ENCODE measurements at regions of chr9 and their contacts with region 1.

Region 1: GRCh38 chr9:117411548-117411947 is 3.3 kb downstream of the ASTN2 start:
- DNase-seq: peak; percentile 74
- H3K4me3 ChIP-seq: peak overlapping the region in 1 of 2 experiments; percentile 23; a peak in 2 of 4 replicates
- H3K27ac ChIP-seq: peak overlapping the region in 1 of 2 experiments; percentile 73; a peak in 1 of 4 replicates
- H3K4me1 ChIP-seq: peaks cover 0 to 41% of the 10 kb centered on the region in 2 experiments; a peak in 2 of 4 replicates
- H3K27me3 ChIP-seq: peaks cover 33% of the 10 kb centered on the region
- CTCF ChIP-seq: peak; percentile 65
- EP300 ChIP-seq: peak in 1 of 2 experiments; percentile 36; a peak in 1 of 4 replicates
- RAD21 ChIP-seq: peak; percentile 89

Region 2: DNA sequence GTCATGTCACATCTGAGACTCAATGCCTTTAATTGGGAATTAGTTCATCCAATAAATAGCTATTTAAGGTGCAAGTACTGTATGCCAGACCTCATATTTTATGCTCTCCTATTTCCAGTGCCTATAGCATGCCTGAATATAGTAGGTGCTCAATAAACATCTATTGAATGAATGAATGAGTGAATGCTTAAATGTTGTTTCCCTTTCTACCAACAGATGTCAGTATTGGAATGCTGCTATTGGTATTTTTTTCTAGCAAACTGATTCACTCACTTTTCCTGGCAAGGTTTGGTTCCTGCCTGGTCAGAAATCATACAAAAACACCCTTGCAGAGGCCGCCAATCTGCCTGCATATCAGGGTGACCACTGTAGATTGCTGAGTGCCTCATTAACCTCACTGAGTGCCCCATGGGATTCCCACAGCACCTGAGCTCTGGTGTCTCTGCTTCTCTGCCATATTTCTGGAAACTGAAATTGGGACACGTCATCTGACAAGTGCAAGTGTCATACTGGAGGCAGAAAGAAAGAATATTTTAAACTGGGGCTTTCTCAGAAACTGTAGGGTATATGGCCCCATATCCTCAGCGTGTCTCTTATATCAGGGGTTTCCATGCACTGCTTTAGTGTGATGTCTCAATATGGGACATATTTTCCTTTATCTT is 364.8 kb before region 1 on chr9:
- CTCF ChIA-PET with region 1: interaction called, 10 read pairs
- POLR2A ChIA-PET with region 1: no interaction called
- DNase-seq: no peak
- H3K4me3 ChIP-seq: no peak overlapping the region
- H3K27ac ChIP-seq: no peak overlapping the region
- H3K4me1 ChIP-seq: peaks cover 0 to 3% of the 10 kb centered on the region in 2 experiments; a peak in 1 of 4 replicates
- H3K27me3 ChIP-seq: no peaks in the 10 kb centered on the region
- CTCF ChIP-seq: 0 out of 2 replicates have a peak, but pooled peaks have one; percentile 20
- EP300 ChIP-seq: no peak
- RAD21 ChIP-seq: peak; percentile 45; the same call in 1 of the 2 replicates

Region 3: DNA sequence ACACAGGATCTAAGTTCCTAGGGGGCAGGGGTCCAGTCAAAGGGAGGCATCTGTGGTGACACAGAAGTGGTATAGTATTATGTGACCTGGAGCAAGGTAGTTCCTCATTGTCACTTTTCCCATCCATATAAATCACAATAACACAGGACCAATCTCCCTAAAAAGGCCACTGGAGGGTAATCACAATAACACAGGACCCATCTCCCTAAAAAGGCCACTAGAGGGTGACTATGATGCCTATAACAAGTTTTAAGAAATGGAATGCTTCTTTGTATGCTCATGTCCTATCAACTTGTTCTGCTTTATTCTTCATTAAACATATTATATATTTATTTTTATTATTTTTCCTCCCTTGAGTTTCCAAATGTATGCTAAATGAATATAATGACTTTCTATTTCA is 251.3 kb before region 1 on chr9:
- CTCF ChIA-PET with region 1: interaction called, 12 read pairs
- POLR2A ChIA-PET with region 1: interaction called, 5 read pairs
- DNase-seq: no peak
- H3K4me3 ChIP-seq: no peak overlapping the region
- H3K27ac ChIP-seq: no peak overlapping the region
- H3K4me1 ChIP-seq: peaks cover 0 to 19% of the 10 kb centered on the region in 2 experiments; a peak in 1 of 4 replicates
- H3K27me3 ChIP-seq: no peaks in the 10 kb centered on the region
- CTCF ChIP-seq: no peak
- EP300 ChIP-seq: no peak
- RAD21 ChIP-seq: peak; percentile 51

Region 4: DNA sequence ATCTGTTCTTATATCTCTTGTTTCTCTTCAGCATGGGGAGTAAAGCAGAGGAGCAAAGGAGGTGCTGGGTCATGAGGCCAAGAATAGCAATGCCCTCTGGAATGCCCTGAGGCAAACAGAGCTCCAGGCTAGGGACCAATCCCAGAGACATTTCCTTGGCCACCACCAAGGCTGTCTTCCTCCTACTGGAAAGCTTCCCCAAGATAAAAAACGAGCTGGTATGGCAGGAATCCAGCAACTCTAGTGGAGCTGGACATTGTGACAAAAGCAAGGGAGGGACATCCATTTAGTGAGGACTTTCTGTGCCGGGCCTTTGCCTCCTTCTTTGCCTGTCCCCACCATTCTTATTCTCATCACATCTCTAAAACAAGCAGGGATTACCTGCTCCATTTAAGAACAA is 158.3 kb before region 1 on chr9:
- CTCF ChIA-PET with region 1: interaction called, 20 read pairs
- POLR2A ChIA-PET with region 1: no interaction called
- DNase-seq: no peak
- H3K4me3 ChIP-seq: no peak overlapping the region
- H3K27ac ChIP-seq: peak overlapping the region in 1 of 2 experiments; percentile 22; a peak in 1 of 4 replicates
- H3K4me1 ChIP-seq: peaks cover 0 to 16% of the 10 kb centered on the region in 2 experiments; a peak in 2 of 4 replicates
- H3K27me3 ChIP-seq: no peaks in the 10 kb centered on the region
- CTCF ChIP-seq: no peak
- EP300 ChIP-seq: no peak
- RAD21 ChIP-seq: no peak

Region 5: GRCh38 chr9:117305454-117305853 is 106.1 kb before region 1 on chr9:
- CTCF ChIA-PET with region 1: interaction called, 24 read pairs
- POLR2A ChIA-PET with region 1: no interaction called
- DNase-seq: no peak
- H3K4me3 ChIP-seq: no peak overlapping the region
- H3K27ac ChIP-seq: peak overlapping the region in 1 of 2 experiments; percentile 92; a peak in 2 of 4 replicates
- H3K4me1 ChIP-seq: peaks cover 0 to 65% of the 10 kb centered on the region in 2 experiments; a peak in 2 of 4 replicates
- H3K27me3 ChIP-seq: no peaks in the 10 kb centered on the region
- CTCF ChIP-seq: no peak
- EP300 ChIP-seq: no peak
- RAD21 ChIP-seq: no peak

Region 6: DNA sequence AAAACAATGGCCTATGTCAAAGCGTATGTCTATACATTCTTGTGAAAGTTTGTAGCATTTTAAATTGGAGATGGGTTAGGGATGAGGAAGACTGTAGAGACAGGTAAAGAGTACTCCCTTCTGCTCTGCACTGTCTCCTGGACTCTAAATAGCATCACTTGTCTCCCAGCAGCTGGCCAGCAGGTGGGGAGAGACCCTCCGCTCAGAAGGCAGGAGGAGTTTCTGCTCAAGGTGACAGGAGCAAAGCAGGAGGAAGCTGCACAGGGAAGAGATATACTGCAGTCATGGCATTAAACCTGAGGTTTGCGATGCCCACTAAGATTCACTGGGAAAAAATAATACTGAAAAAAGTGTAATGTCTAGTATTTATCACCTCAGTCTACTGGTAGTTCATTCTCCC is 14.0 kb after region 1 on chr9:
- CTCF ChIA-PET with region 1: interaction called, 60 read pairs
- POLR2A ChIA-PET with region 1: no interaction called
- DNase-seq: no peak
- H3K4me3 ChIP-seq: no peak overlapping the region
- H3K27ac ChIP-seq: no peak overlapping the region
- H3K4me1 ChIP-seq: no peaks in the 10 kb centered on the region
- H3K27me3 ChIP-seq: no peaks in the 10 kb centered on the region
- CTCF ChIP-seq: no peak
- EP300 ChIP-seq: no peak
- RAD21 ChIP-seq: no peak